Mucosa of descending colon (tissue), 3 donors: ENCODE measurements at regions of chr10 and their contacts with region 1.

Region 1: GRCh38 chr10:97463363-97464132 is 17.6 kb downstream of the ZDHHC16 start:
- DNase-seq: peak in 1 of 3 donors; percentile 76
- ATAC-seq: peak; percentile 94
- H3K4me3 ChIP-seq: no peak overlapping the region
- H3K4me1 ChIP-seq: no peaks in the 10 kb centered on the region
- CTCF ChIP-seq: peak; percentile 54

Region 2: GRCh38 chr10:97376413-97376812 is 87.1 kb before region 1 on chr10:
- intact Hi-C with region 1: no loop called
- DNase-seq: no peak
- ATAC-seq: no peak
- H3K4me3 ChIP-seq: no peak overlapping the region
- H3K4me1 ChIP-seq: no peaks in the 10 kb centered on the region
- CTCF ChIP-seq: no peak

Region 3: DNA sequence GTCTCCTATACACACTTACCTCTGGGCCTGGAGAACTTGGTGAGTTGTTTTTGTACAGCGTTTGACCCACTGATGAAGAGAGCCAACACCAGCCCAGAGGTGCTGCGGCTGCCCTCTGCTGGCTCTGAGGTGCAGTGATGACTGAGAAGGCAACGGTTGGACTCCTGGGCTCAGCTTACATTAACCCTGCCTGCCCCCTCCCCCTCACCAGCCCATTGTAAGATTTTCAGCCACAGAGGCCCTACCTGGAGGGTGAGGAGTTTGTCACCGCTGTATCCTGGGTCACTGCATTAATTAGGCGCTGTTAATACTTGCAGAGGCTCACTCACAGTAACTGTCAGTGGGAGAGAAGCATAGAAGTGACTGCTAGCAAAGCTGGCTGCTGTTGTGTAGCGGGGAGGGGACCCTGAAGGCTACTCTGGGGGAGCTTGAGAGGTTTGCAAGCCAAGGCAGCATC is 90.1 kb after region 1 on chr10:
- intact Hi-C with region 1: loop called (anchors 10 kb)
- DNase-seq: peak in 2 of 3 donors; percentile 72 to 75
- ATAC-seq: peak; percentile 89
- H3K4me3 ChIP-seq: no peak overlapping the region
- H3K4me1 ChIP-seq: no peaks in the 10 kb centered on the region
- CTCF ChIP-seq: peak; percentile 42